CD8-positive, alpha-beta memory T cell (primary cell): ENCODE measurements at regions of chr12 and their contacts with region 1.

Region 1: GRCh38 chr12:48995061-48995879 is 3.9 kb downstream of the DDN start:
- DNase-seq: peak in 4 of 5 donors; percentile 27 to 68 (median 38)
- H3K4me3 ChIP-seq: no peak overlapping the region
- H3K4me3 Mint-ChIP-seq: peak overlapping the region; percentile 12 to 66 (median 45)
- H3K27ac ChIP-seq: no peak overlapping the region
- H3K27ac Mint-ChIP-seq: peak overlapping the region in 7 of 8 donors; percentile 43 to 97 (median 92)
- H3K4me1 ChIP-seq: peaks cover 33% of the 10 kb centered on the region
- H3K4me1 Mint-ChIP-seq: peaks cover 27 to 46% (median 31%) of the 10 kb centered on the region in 3 donors
- H3K27me3 ChIP-seq: peaks cover 26% of the 10 kb centered on the region
- H3K27me3 Mint-ChIP-seq: peaks cover 47 to 51% of the 10 kb centered on the region in 2 donors

Region 2: GRCh38 chr12:48957141-48958048 is 37.9 kb before region 1 on chr12 and contains the start of gene ARF3:
- CTCF ChIA-PET with region 1: interaction called, 10 read pairs
- POLR2A ChIA-PET with region 1: no interaction called
- DNase-seq: peak; percentile 90 to 96 (median 92)
- H3K4me3 ChIP-seq: peak within 1 kb of the TSS; percentile 83
- H3K4me3 Mint-ChIP-seq: peak within 1 kb of the TSS; percentile 93 to 99 (median 96)
- H3K27ac ChIP-seq: peak within 1 kb of the TSS; percentile 84
- H3K27ac Mint-ChIP-seq: peak within 1 kb of the TSS; percentile 68 to 97 (median 93)
- H3K4me1 ChIP-seq: peaks cover 33% of the 10 kb centered on the region
- H3K4me1 Mint-ChIP-seq: peaks cover 35 to 54% (median 44%) of the 10 kb centered on the region in 3 donors
- H3K27me3 ChIP-seq: no peaks in the 10 kb centered on the region
- H3K27me3 Mint-ChIP-seq: peaks cover 0 to 6% of the 10 kb centered on the region in 2 donors
- total RNA-seq, gene ARF3: 91.5 to 91.8 TPM

Region 3: DNA sequence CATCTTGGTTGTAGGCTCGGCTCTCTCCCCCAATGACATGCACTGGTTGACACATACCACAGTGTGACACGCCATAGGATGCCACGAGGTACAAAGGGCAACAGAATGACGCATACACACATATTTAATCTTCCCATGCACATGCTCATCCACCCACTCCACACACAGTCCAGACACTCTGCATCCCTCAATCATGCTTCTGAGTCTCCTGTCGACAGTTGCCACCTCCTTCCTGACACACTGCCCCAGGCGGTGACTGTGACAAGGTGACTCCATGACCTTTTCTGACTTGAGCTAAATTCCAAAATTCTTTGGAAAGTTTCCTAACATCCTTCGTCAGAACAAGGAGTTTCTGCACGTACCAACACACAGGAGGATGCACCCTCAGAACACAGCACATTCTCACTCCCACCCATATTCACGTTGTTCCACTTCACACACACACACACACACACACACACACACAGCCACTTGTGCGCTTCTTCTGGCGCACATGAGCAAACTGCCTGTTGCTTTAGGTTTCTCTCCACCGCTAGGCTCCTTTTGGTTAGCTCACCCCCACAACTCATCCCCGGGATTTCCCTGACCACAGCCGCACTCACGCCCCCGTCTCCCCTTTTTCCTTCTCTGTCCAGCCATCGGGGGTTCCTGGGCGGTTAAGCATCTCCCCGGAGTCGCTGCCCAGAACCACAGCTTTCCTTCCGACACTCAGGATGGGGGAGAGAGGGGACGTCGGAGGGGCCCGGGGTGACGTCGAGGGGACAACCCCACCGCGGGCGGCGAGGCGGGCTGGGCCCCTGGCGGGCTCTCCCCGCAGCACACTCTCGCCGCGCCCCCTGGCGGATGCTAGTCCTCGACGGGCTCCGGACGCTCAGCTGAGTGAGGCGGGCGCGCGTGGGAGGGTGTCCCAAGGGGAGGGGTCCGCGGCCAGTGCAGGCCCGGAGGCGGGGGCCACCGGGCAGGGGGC is 17.7 kb before region 1 on chr12:
- CTCF ChIA-PET with region 1: interaction called, 237 read pairs
- POLR2A ChIA-PET with region 1: interaction called, 5 read pairs
- DNase-seq: peak; percentile 77 to 87 (median 80)
- H3K4me3 ChIP-seq: peak overlapping the region; percentile 89
- H3K4me3 Mint-ChIP-seq: peak overlapping the region; percentile 63 to 73 (median 71)
- H3K27ac ChIP-seq: no peak overlapping the region
- H3K27ac Mint-ChIP-seq: peak overlapping the region in 7 of 8 donors; percentile 36 to 93 (median 87)
- H3K4me1 ChIP-seq: peaks cover 49% of the 10 kb centered on the region
- H3K4me1 Mint-ChIP-seq: peaks cover 43 to 58% (median 51%) of the 10 kb centered on the region in 3 donors
- H3K27me3 ChIP-seq: peaks cover 25% of the 10 kb centered on the region
- H3K27me3 Mint-ChIP-seq: peaks cover 12 to 22% of the 10 kb centered on the region in 2 donors

Region 4: DNA sequence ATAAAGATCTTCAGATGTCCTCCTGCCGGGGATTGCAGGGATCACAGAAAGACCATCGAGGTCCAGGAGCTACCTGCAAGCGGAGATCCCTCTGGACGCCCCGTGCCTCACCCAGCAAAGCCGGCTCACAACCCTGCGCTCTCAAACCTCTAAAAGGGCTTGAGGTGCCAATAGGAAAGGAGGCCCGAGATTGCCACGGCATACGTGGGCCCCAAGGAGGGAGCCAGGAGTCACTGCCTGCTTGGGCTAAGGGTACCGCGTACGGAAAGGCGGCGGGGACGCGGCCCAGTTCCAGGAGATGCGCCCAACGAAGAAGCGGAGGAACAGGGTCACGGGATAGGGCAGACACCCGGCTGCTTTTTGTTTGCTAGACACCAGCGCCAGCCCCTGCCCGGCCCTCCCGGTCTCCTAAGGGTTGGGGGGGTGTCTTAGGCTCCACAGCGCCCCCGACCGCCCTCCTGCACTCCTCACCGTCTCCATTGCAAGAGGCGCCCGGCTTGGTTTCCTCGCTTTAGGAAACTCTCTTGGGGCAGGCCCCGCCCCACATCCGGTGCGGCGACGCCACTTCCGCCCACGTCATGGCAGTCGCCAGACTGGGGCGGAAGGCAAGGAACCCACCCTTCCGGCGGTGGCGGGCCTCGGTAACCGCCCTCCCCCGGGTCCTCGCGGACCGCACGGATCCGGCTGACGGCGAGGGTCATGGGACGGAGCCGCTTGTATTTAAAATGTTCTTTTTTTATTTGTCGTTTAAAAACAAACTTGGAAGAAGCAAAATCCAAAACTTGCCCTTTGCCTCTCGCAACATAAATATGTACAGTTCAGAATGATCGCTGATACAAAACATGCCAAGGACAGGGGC is 23.2 kb after region 1 on chr12 and contains the start of gene PRKAG1:
- CTCF ChIA-PET with region 1: interaction called, 18 read pairs
- POLR2A ChIA-PET with region 1: no interaction called
- DNase-seq: peak; percentile 96 to 99 (median 98)
- H3K4me3 ChIP-seq: peak within 1 kb of the TSS; percentile 89
- H3K4me3 Mint-ChIP-seq: peak within 1 kb of the TSS; percentile 85 to 98 (median 94)
- H3K27ac ChIP-seq: peak within 1 kb of the TSS; percentile 92
- H3K27ac Mint-ChIP-seq: peak within 1 kb of the TSS; percentile 98 to 100 (median 99)
- H3K4me1 ChIP-seq: peaks cover 22% of the 10 kb centered on the region
- H3K4me1 Mint-ChIP-seq: peaks cover 26 to 55% (median 41%) of the 10 kb centered on the region in 3 donors
- H3K27me3 ChIP-seq: no peaks in the 10 kb centered on the region
- H3K27me3 Mint-ChIP-seq: peaks cover 0 to 1% of the 10 kb centered on the region in 2 donors
- total RNA-seq, gene PRKAG1: 73.3 to 78.3 TPM

Region 5: GRCh38 chr12:49043856-49044258 is 48.6 kb after region 1 on chr12:
- CTCF ChIA-PET with region 1: interaction called, 13 read pairs
- POLR2A ChIA-PET with region 1: no interaction called
- DNase-seq: peak; percentile 73 to 91 (median 78)
- H3K4me3 ChIP-seq: no peak overlapping the region
- H3K4me3 Mint-ChIP-seq: peak overlapping the region in 2 of 7 donors; percentile 18 to 57
- H3K27ac ChIP-seq: peak overlapping the region; percentile 18
- H3K27ac Mint-ChIP-seq: peak overlapping the region; percentile 62 to 97 (median 94)
- H3K4me1 ChIP-seq: no peaks in the 10 kb centered on the region
- H3K4me1 Mint-ChIP-seq: peaks cover 8 to 16% (median 12%) of the 10 kb centered on the region in 3 donors
- H3K27me3 ChIP-seq: no peaks in the 10 kb centered on the region
- H3K27me3 Mint-ChIP-seq: no peaks in the 10 kb centered on the region

Region 6: GRCh38 chr12:49110464-49111155 is 115.3 kb after region 1 on chr12 and contains the start of gene LMBR1L:
- CTCF ChIA-PET with region 1: interaction called, 5 read pairs
- POLR2A ChIA-PET with region 1: interaction called, 12 read pairs
- DNase-seq: peak; percentile 92 to 98 (median 96)
- H3K4me3 ChIP-seq: peak within 1 kb of the TSS; percentile 93
- H3K4me3 Mint-ChIP-seq: peak within 1 kb of the TSS; percentile 97 to 99 (median 99)
- H3K27ac ChIP-seq: peak within 1 kb of the TSS; percentile 87
- H3K27ac Mint-ChIP-seq: peak within 1 kb of the TSS; percentile 86 to 98 (median 98)
- H3K4me1 ChIP-seq: peaks cover 21% of the 10 kb centered on the region
- H3K4me1 Mint-ChIP-seq: peaks cover 36 to 44% (median 43%) of the 10 kb centered on the region in 3 donors
- H3K27me3 ChIP-seq: no peaks in the 10 kb centered on the region
- H3K27me3 Mint-ChIP-seq: no peaks in the 10 kb centered on the region
- total RNA-seq, gene LMBR1L: 47.2 to 48.7 TPM